Naive thymus-derived CD4-positive, alpha-beta T cell (primary cell): ENCODE measurements at regions of chr12 and their contacts with region 1.

Region 1: GRCh38 chr12:50211392-50212070 is 44.4 kb upstream of the CERS5 start:
- DNase-seq: peak in 1 of 9 donors; percentile 20
- ATAC-seq: no peak
- H3K4me3 ChIP-seq: peak overlapping the region; percentile 36
- H3K4me3 Mint-ChIP-seq: peak overlapping the region; percentile 69 to 86 (median 74)
- H3K27ac ChIP-seq: peak overlapping the region; percentile 65
- H3K27ac Mint-ChIP-seq: peak overlapping the region; percentile 86 to 98 (median 94)
- H3K4me1 ChIP-seq: peaks cover 15 to 35% of the 10 kb centered on the region in 2 donors
- H3K4me1 Mint-ChIP-seq: peaks cover 25 to 52% (median 44%) of the 10 kb centered on the region in 7 donors
- H3K27me3 ChIP-seq: no peaks in the 10 kb centered on the region
- H3K27me3 Mint-ChIP-seq: no peaks in the 10 kb centered on the region

Region 2: GRCh38 chr12:50099302-50100008 is 112.1 kb before region 1 on chr12:
- CTCF ChIA-PET with region 1: no interaction called
- POLR2A ChIA-PET with region 1: no interaction called
- intact Hi-C with region 1: no loop called
- DNase-seq: no peak
- ATAC-seq: no peak
- H3K4me3 ChIP-seq: no peak overlapping the region
- H3K4me3 Mint-ChIP-seq: no peak overlapping the region
- H3K27ac ChIP-seq: no peak overlapping the region
- H3K27ac Mint-ChIP-seq: peak overlapping the region in 5 of 9 donors; percentile 15 to 51 (median 28)
- H3K4me1 ChIP-seq: no peaks in the 10 kb centered on the region
- H3K4me1 Mint-ChIP-seq: peaks cover 0 to 7% (median 0%) of the 10 kb centered on the region in 7 donors
- H3K27me3 ChIP-seq: peaks cover 0 to 3% of the 10 kb centered on the region in 2 donors
- H3K27me3 Mint-ChIP-seq: no peaks in the 10 kb centered on the region

Region 3: GRCh38 chr12:50121641-50122040 is 89.9 kb before region 1 on chr12:
- CTCF ChIA-PET with region 1: no interaction called
- POLR2A ChIA-PET with region 1: no interaction called
- intact Hi-C with region 1: no loop called
- DNase-seq: no peak
- ATAC-seq: no peak
- H3K4me3 ChIP-seq: no peak overlapping the region
- H3K4me3 Mint-ChIP-seq: no peak overlapping the region
- H3K27ac ChIP-seq: no peak overlapping the region
- H3K27ac Mint-ChIP-seq: peak overlapping the region in 6 of 9 donors; percentile 6 to 62 (median 16)
- H3K4me1 ChIP-seq: peaks cover 5 to 7% of the 10 kb centered on the region in 2 donors
- H3K4me1 Mint-ChIP-seq: peaks cover 27 to 56% (median 45%) of the 10 kb centered on the region in 7 donors
- H3K27me3 ChIP-seq: no peaks in the 10 kb centered on the region
- H3K27me3 Mint-ChIP-seq: no peaks in the 10 kb centered on the region

Region 4: DNA sequence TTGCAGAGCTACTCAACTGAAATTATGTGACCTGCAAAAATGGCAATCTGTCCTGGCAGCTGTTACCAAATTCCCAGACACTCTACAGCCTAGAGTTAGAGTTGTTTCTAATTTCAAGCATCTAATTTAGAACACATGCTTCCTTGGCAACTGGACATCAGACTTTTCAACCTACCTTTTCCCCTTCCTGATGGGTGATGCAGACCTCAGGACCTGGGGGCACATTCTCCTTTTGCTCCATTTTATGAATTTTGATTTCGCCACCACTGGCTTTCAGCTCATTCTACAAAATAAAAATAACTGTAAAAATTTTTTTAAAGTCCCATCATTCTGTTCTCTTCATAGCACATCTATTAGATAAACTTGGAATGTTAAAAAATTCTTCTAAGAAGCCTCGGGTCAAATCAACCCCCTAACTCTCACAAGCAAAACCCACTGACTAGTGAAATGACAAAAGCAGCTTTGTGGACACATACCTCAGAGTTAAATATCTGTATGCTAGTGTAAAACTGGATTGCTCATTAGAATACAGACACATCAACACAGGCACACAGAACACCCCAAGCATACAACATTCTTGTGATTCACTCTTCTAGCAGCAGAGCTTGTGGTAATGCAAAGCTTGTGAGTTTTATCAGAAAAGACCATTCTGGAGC is 10.8 kb before region 1 on chr12:
- CTCF ChIA-PET with region 1: interaction called, 5 read pairs
- POLR2A ChIA-PET with region 1: interaction called, 11 read pairs
- intact Hi-C with region 1: no loop called
- DNase-seq: no peak
- ATAC-seq: no peak
- H3K4me3 ChIP-seq: no peak overlapping the region
- H3K4me3 Mint-ChIP-seq: no peak overlapping the region
- H3K27ac ChIP-seq: no peak overlapping the region
- H3K27ac Mint-ChIP-seq: no peak overlapping the region
- H3K4me1 ChIP-seq: no peaks in the 10 kb centered on the region
- H3K4me1 Mint-ChIP-seq: peaks cover 0 to 5% (median 0%) of the 10 kb centered on the region in 7 donors
- H3K27me3 ChIP-seq: no peaks in the 10 kb centered on the region
- H3K27me3 Mint-ChIP-seq: no peaks in the 10 kb centered on the region

Region 5: DNA sequence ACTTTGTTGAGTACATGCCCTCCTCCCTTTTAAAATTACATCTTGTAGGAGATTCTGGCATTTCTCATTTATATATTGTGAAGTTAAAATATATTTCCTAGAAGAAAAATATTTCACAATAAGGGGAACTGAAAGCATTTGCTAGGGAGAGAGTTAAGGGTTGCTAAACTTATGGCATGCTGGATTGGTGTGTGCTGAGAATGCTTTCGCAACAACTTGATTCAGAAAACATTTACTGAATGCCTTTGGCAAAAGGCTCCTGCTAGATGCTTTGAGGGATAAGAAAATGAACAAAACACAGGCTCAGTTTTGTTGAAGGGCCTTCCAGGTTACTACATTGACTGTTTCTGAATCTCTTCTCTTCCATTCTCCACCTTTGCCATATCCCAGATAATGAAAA is 360.7 kb after region 1 on chr12:
- CTCF ChIA-PET with region 1: no interaction called
- POLR2A ChIA-PET with region 1: no interaction called
- intact Hi-C with region 1: no loop called
- DNase-seq: no peak
- ATAC-seq: peak; percentile 34
- H3K4me3 ChIP-seq: no peak overlapping the region
- H3K4me3 Mint-ChIP-seq: no peak overlapping the region
- H3K27ac ChIP-seq: no peak overlapping the region
- H3K27ac Mint-ChIP-seq: peak overlapping the region in 4 of 9 donors; percentile 12 to 81 (median 54)
- H3K4me1 ChIP-seq: peaks cover 0 to 11% of the 10 kb centered on the region in 2 donors
- H3K4me1 Mint-ChIP-seq: peaks cover 29 to 59% (median 48%) of the 10 kb centered on the region in 7 donors
- H3K27me3 ChIP-seq: no peaks in the 10 kb centered on the region
- H3K27me3 Mint-ChIP-seq: no peaks in the 10 kb centered on the region